Natural killer cell (primary cell): ENCODE measurements at regions of chr14 and their contacts with region 1.

Region 1: DNA sequence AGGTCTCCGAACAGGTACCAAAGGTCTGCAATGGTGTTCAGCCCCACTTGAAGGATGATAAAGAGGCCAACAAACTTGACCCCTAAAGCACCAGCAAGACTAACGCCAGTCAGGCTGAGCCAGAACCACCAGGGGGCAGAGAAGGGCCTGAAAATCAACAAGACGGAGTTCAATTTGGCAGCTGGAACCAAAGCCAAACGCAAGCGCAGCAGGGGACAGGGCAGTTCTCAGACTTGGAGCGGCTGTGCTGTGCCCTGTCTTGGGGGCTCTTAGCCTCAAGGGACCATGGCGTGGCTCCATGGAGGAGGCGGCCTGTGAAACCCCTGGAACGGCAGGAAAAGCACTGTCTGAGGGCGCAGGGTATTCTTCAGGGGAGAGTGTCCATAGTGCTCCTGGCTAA is 19.6 kb downstream of the POMT2 start:
- DNase-seq: peak in 1 of 2 donors; percentile 64
- ATAC-seq: peak; percentile 52 to 54 (median 53)
- H3K4me3 ChIP-seq: no peak overlapping the region
- H3K4me3 Mint-ChIP-seq: no peak overlapping the region
- H3K27ac ChIP-seq: no peak overlapping the region
- H3K27ac Mint-ChIP-seq: no peak overlapping the region
- H3K4me1 ChIP-seq: no peaks in the 10 kb centered on the region
- H3K4me1 Mint-ChIP-seq: no peaks in the 10 kb centered on the region
- H3K27me3 ChIP-seq: no peaks in the 10 kb centered on the region
- H3K27me3 Mint-ChIP-seq: no peaks in the 10 kb centered on the region
- CTCF ChIP-seq: no peak

Region 2: GRCh38 chr14:77268989-77269600 is 32.0 kb before region 1 on chr14:
- intact Hi-C with region 1: no loop called
- DNase-seq: no peak
- ATAC-seq: peak in 1 of 3 donors; percentile 10
- H3K4me3 ChIP-seq: no peak overlapping the region
- H3K4me3 Mint-ChIP-seq: no peak overlapping the region
- H3K27ac ChIP-seq: no peak overlapping the region
- H3K27ac Mint-ChIP-seq: no peak overlapping the region
- H3K4me1 ChIP-seq: no peaks in the 10 kb centered on the region
- H3K4me1 Mint-ChIP-seq: no peaks in the 10 kb centered on the region
- H3K27me3 ChIP-seq: peaks cover 7% of the 10 kb centered on the region
- H3K27me3 Mint-ChIP-seq: peaks cover 28 to 48% of the 10 kb centered on the region in 2 donors
- CTCF ChIP-seq: no peak

Region 3: DNA sequence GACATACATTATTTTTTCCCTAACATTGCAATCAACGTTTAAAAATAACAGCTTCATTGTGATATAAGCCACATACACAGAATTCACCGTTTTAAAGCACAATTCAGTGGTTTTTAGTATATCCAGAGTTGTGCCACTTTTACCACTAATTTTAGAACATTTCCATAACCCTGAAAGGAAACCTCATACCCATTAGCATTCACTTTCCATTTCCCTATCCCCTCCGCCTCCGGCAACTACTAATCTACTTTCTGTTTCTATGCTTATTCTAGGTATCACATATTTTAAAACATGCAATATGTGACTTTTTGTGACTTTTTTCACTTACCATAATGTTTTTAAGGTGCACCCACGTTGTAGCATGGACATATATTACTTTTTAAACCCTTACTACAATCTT is 253.1 kb after region 1 on chr14:
- intact Hi-C with region 1: loop called (anchors 2 kb)
- DNase-seq: no peak
- ATAC-seq: peak; percentile 28 to 69 (median 62)
- H3K4me3 ChIP-seq: no peak overlapping the region
- H3K4me3 Mint-ChIP-seq: peak overlapping the region; percentile 75
- H3K27ac ChIP-seq: peak overlapping the region; percentile 58
- H3K27ac Mint-ChIP-seq: peak overlapping the region; percentile 74 to 84
- H3K4me1 ChIP-seq: peaks cover 13% of the 10 kb centered on the region
- H3K4me1 Mint-ChIP-seq: peaks cover 14 to 20% of the 10 kb centered on the region in 2 donors
- H3K27me3 ChIP-seq: no peaks in the 10 kb centered on the region
- H3K27me3 Mint-ChIP-seq: no peaks in the 10 kb centered on the region
- CTCF ChIP-seq: no peak